HepG2 (cell line): ENCODE measurements at regions of chr2 and their contacts with region 1.

Region 1: DNA sequence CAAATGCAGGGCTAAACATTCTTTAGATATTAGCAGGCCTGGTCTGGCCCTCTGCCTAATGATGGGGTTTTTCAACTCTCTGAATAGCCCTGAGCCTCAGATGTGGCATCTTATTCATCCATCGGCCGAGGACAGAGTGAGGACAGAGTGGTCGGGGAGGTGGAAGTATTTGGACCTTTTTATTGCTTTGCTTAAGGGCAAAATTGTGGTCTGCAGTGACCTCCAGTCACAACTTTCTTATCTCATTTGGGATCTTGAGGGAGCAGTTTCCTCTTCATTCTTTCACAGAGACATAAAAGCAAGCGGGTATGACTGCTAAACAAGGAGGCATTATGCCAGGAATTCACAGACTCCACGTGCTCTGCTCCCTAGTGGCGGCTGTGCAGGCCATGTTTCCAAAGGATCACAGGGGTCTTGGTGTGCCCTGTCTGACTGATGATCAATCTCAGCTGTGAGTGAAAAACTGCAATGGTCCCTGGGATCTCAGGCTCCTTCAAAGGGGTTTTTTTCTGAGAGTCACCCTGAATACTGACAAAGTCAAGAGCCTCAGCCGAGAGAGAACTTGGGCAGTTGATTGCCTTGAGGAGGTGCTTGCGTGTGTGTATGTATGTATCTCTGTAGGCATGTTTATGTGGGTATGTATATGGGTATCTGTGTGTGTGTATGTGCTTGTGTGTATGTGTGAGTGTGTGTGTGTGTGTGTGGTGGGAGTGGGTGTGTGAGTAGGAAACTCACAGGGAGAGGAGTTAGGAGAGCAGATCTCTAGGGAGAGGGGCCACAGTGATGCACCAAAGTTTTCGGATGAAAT is 47.6 kb downstream of the RAPGEF4 start:
- DNase-seq: peak; percentile 45
- ATAC-seq: peak; percentile 89
- H3K4me3 ChIP-seq: no peak overlapping the region
- H3K27ac ChIP-seq: no peak overlapping the region
- H3K4me1 ChIP-seq: no peaks in the 10 kb centered on the region
- H3K27me3 ChIP-seq: peaks cover 2% of the 10 kb centered on the region in 2 experiments; a peak in 2 of 5 replicates
- CTCF ChIP-seq: peak; percentile 45
- EP300 ChIP-seq: no peak
- POLR2A ChIP-seq: no peak
- RAD21 ChIP-seq: no peak

Region 2: GRCh38 chr2:172704072-172704936 is 79.0 kb before region 1 on chr2:
- CTCF ChIA-PET with region 1: no interaction called
- POLR2A ChIA-PET with region 1: no interaction called
- in situ Hi-C with region 1: no loop called
- intact Hi-C with region 1: loop called (anchors 1 kb)
- DNase-seq: peak; percentile 55
- ATAC-seq: peak; percentile 97
- H3K4me3 ChIP-seq: no peak overlapping the region
- H3K27ac ChIP-seq: no peak overlapping the region
- H3K4me1 ChIP-seq: no peaks in the 10 kb centered on the region
- H3K27me3 ChIP-seq: peaks cover 2 to 3% of the 10 kb centered on the region in 2 experiments; a peak in 3 of 5 replicates
- CTCF ChIP-seq: peak; percentile 76
- EP300 ChIP-seq: no peak
- POLR2A ChIP-seq: no peak
- RAD21 ChIP-seq: no peak